Mammary epithelial cell (primary cell): ENCODE measurements at regions of chr10 and their contacts with region 1.

Region 1: DNA sequence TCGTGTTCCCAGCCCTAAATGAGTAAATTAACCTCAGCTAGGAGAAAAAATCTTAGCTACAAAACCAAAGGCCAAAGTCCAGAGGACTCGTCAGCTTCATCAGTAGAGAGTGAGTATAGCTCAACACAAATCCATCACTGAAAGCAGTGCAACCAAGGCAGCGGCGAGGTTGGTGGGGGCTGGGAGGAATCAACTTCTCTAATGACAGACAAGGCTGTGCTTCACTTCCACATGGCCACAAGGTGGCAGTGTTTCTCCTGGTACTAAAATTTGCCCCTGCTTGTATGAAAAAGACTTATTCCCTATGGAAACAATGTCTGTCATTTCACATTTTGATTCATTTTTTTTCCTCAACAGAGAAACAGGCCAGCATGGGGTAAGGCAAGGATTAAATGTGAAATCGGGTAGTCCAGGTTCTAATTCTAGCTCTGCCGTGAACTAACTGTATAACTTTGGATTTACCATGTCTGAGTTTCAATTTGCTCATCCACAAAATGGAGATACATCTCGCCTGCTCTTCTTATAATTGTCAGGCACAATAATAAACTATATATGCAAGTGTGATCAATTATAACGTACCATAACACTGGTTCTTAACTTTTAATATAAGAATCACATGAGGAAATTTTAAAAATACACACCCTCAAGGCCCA is 39.3 kb downstream of the FAS start:
- DNase-seq: peak; percentile 62
- H3K4me3 ChIP-seq: no peak overlapping the region
- H3K27ac ChIP-seq: no peak overlapping the region
- H3K4me1 ChIP-seq: peaks cover 18% of the 10 kb centered on the region
- H3K27me3 ChIP-seq: no peaks in the 10 kb centered on the region
- CTCF ChIP-seq: peak; percentile 77 to 86

Region 2: GRCh38 chr10:89115876-89116627 is 86.1 kb after region 1 on chr10:
- CTCF ChIA-PET with region 1: no interaction called
- dilution Hi-C with region 1: no loop called
- in situ Hi-C with region 1: no loop called
- intact Hi-C with region 1: loop called (anchors 5 kb)
- DNase-seq: peak; percentile 80
- H3K4me3 ChIP-seq: no peak overlapping the region
- H3K27ac ChIP-seq: no peak overlapping the region
- H3K4me1 ChIP-seq: peaks cover 32% of the 10 kb centered on the region
- H3K27me3 ChIP-seq: no peaks in the 10 kb centered on the region
- CTCF ChIP-seq: no peak

Region 3: GRCh38 chr10:89207181-89207800 is 177.4 kb after region 1 on chr10 and contains the start of gene CH25H:
- CTCF ChIA-PET with region 1: no interaction called
- dilution Hi-C with region 1: no loop called
- in situ Hi-C with region 1: loop called (anchors 5 kb)
- intact Hi-C with region 1: no loop called
- DNase-seq: peak; percentile 66
- H3K4me3 ChIP-seq: peak within 1 kb of the TSS; percentile 37 to 43 (median 40)
- H3K27ac ChIP-seq: no peak within 1 kb of the TSS
- H3K4me1 ChIP-seq: peaks cover 19% of the 10 kb centered on the region
- H3K27me3 ChIP-seq: peaks cover 6% of the 10 kb centered on the region
- CTCF ChIP-seq: no peak
- total RNA-seq, gene CH25H: 0.17 TPM in 1 of 2 donors, not detected in the other